BJ (cell line): ENCODE measurements at regions of chr2 and their contacts with region 1.

Region 1: GRCh38 chr2:119290859-119291587 is 67.4 kb downstream of the STEAP3 start:
- DNase-seq: no peak
- H3K4me3 ChIP-seq: no peak overlapping the region
- H3K27me3 ChIP-seq: no peaks in the 10 kb centered on the region
- CTCF ChIP-seq: peak; percentile 99

Region 2: DNA sequence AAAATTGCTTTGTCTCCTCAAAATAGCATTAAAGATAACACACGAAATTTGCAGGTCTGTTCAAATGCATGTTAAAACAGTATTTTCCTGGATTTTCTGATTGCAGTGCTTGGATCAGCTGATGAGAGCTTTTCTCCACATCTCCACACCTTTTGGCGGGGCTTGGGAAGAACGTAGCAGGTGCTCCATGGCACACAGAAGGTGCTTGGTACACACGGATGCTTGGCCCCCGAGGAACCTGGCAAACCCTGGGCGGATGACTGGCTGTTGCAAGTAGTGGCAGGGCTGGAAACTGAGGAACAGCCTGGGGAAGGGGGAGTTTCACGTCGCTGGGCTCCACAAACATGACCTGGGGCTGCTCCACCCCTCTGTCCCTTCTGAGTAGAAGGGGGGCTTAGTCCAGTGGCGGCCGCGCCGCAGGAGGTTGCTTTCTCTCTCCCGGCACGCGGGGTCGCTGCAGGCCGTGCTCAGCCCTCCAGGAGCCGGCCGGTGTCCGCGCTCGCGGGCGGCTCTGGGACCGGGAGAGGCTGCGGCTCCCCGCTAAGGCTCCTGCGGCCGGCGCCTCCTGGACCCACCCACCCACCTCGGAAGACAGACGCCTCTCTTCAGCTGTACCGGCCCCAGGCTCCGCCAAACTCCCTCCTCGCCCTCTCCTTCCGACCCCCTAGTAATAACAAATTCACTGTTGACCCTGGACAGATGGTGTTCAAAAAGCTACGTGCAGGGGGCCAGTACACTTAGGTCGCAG is 279.7 kb before region 1 on chr2:
- CTCF ChIA-PET with region 1: interaction called, 34 read pairs
- POLR2A ChIA-PET with region 1: no interaction called
- DNase-seq: no peak
- H3K4me3 ChIP-seq: no peak overlapping the region
- H3K27me3 ChIP-seq: peaks cover 2% of the 10 kb centered on the region
- CTCF ChIP-seq: peak; percentile 60

Region 3: GRCh38 chr2:119218478-119219064 is 72.5 kb before region 1 on chr2:
- CTCF ChIA-PET with region 1: interaction called, 40 read pairs
- POLR2A ChIA-PET with region 1: no interaction called
- DNase-seq: no peak
- H3K4me3 ChIP-seq: no peak overlapping the region
- H3K27me3 ChIP-seq: no peaks in the 10 kb centered on the region
- CTCF ChIP-seq: peak; percentile 71

Region 4: DNA sequence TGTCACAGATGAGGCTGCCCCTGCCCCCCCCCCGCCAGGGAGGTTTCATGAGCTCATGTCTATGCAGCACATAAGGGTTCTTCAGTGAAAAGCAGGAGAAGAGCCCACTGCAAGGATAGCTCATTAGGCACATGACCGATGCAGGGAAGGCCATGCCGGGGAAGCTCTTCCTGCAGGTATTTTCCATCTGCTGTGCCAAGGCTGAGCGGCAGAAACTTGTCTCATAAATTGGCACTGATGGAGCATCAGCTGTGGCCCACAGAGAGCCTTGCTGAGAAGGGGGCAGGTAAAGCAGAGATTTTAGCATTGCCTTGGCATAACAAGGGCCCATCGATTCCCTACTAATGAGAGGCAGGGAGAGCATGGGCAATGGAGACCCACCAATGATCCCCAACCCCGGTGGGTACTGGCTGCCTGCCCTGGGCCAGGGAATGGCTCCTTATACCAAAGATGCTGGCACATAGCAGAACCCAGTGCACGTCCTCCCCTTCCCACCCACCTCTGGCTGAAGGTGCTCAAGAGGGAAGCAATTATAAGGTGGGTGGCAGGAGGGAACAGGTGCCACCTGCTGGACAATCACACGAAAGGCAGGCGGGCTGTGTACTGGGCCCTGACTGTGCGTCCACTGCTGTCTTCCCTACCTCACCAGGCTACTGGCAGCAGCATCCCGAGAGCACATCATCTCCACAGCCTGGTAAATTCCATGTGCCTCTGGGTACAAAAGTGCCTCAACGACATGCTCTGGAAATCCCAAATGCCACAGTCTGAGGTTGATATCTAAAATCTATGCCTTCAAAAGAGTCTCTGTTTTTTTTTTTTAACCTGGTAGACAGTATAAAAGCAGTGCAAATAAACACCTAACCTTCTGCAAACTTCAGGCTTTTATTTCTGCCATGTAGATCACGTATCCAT is 26.0 kb before region 1 on chr2:
- CTCF ChIA-PET with region 1: interaction called, 26 read pairs
- POLR2A ChIA-PET with region 1: no interaction called
- DNase-seq: no peak
- H3K4me3 ChIP-seq: no peak overlapping the region
- H3K27me3 ChIP-seq: no peaks in the 10 kb centered on the region
- CTCF ChIP-seq: peak; percentile 90

Region 5: GRCh38 chr2:120323214-120323613 is 1032.2 kb after region 1 on chr2:
- CTCF ChIA-PET with region 1: no interaction called
- POLR2A ChIA-PET with region 1: no interaction called
- DNase-seq: no peak
- H3K4me3 ChIP-seq: no peak overlapping the region
- H3K27me3 ChIP-seq: peaks cover 15% of the 10 kb centered on the region
- CTCF ChIP-seq: no peak